ENCODE measurements at regions of chr10 and their contacts with region 1.

Region 1: GRCh38 chr10:100518761-100519241 is 860 bp downstream of the SEC31B start:
- DNase-seq: peak; percentile 47
- H3K4me3 Mint-ChIP-seq: no peak overlapping the region
- H3K27ac Mint-ChIP-seq: no peak overlapping the region
- H3K4me1 Mint-ChIP-seq: no peaks in the 10 kb centered on the region
- H3K27me3 Mint-ChIP-seq: no peaks in the 10 kb centered on the region
- CTCF ChIP-seq: no peak

Region 2: GRCh38 chr10:100303724-100304319 is 215.0 kb before region 1 on chr10:
- CTCF ChIA-PET with region 1: no interaction called
- intact Hi-C with region 1: loop called (anchors 10 kb)
- DNase-seq: no peak
- H3K4me3 Mint-ChIP-seq: no peak overlapping the region
- H3K27ac Mint-ChIP-seq: no peak overlapping the region
- H3K4me1 Mint-ChIP-seq: peaks cover 8% of the 10 kb centered on the region
- H3K27me3 Mint-ChIP-seq: peaks cover 10% of the 10 kb centered on the region
- CTCF ChIP-seq: peak; percentile 42

Region 3: GRCh38 chr10:100338434-100339036 is 180.3 kb before region 1 on chr10:
- CTCF ChIA-PET with region 1: interaction called, 5 read pairs
- intact Hi-C with region 1: loop called (anchors 10 kb)
- DNase-seq: peak; percentile 74
- H3K4me3 Mint-ChIP-seq: no peak overlapping the region
- H3K27ac Mint-ChIP-seq: no peak overlapping the region
- H3K4me1 Mint-ChIP-seq: peaks cover 9% of the 10 kb centered on the region
- H3K27me3 Mint-ChIP-seq: peaks cover 24% of the 10 kb centered on the region
- CTCF ChIP-seq: peak; percentile 71

Region 4: GRCh38 chr10:100436255-100436654 is 82.5 kb before region 1 on chr10:
- CTCF ChIA-PET with region 1: no interaction called
- intact Hi-C with region 1: no loop called
- DNase-seq: no peak
- H3K4me3 Mint-ChIP-seq: no peak overlapping the region
- H3K27ac Mint-ChIP-seq: no peak overlapping the region
- H3K4me1 Mint-ChIP-seq: peaks cover 12% of the 10 kb centered on the region
- H3K27me3 Mint-ChIP-seq: no peaks in the 10 kb centered on the region
- CTCF ChIP-seq: no peak

Region 5: GRCh38 chr10:100562008-100562711 is 43.4 kb after region 1 on chr10:
- CTCF ChIA-PET with region 1: no interaction called
- intact Hi-C with region 1: no loop called
- DNase-seq: peak; percentile 58
- H3K4me3 Mint-ChIP-seq: no peak overlapping the region
- H3K27ac Mint-ChIP-seq: no peak overlapping the region
- H3K4me1 Mint-ChIP-seq: no peaks in the 10 kb centered on the region
- H3K27me3 Mint-ChIP-seq: no peaks in the 10 kb centered on the region
- CTCF ChIP-seq: peak; percentile 23

Measured in Calu3 (cell line).